ENCODE measurements at regions of chr11 and their contacts with region 1.

Region 1: DNA sequence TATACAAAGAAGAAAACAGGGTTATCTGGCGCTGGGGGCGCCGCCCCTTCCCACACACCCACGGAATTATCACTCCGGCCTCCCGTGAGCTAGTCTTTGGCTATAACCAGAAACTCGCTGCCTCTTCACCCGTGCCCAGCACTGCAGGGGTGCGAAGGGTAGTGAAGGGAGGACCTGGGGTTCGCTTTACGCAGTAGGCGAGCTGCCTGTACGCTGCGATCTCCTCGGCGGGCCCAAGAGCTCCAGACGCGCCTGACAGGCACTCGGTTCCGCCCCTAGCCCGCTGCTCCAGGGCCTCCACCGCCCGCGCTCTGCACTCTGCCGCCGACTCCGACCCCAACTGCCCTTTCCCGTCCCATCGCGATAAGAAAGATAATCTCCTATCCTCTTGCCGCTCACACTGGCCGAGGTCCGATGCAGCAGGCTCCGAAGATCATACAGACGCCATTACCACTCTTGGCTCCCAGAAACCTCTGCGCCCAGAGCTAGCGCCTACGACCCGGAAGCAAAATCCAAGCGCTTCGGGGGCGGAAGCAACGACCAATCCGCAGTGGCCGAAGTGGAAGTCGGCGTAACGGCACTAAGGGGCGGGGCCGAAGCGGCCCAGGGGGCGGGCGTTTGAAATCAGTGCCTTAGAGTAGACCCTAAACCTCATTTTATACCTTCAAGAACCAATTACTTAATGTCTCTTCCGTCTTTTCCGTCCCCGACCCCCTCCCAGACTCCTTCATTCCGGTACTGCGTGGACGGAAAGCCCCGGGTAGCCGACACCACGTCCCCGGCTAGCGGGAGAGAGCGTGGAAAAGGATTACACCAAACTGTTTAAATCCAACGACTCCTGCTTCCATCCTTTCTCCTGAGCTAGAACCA is at the starts of genes CWC15 and KDM4D:
- DNase-seq: peak; percentile 97
- H3K4me3 Mint-ChIP-seq: peak within 1 kb of the TSS; percentile 97
- H3K27ac Mint-ChIP-seq: peak within 1 kb of the TSS; percentile 89
- H3K4me1 Mint-ChIP-seq: peaks cover 38% of the 10 kb centered on the region
- H3K27me3 Mint-ChIP-seq: no peaks in the 10 kb centered on the region
- total RNA-seq, gene CWC15: 70.6 to 72.3 TPM
- total RNA-seq, gene KDM4D: 1.7 to 2.1 TPM

Region 2: GRCh38 chr11:93784152-93784934 is 1189.0 kb before region 1 on chr11 and contains the start of gene MED17:
- CTCF ChIA-PET with region 1: no interaction called
- intact Hi-C with region 1: loop called (anchors 1 kb)
- DNase-seq: peak; percentile 94
- H3K4me3 Mint-ChIP-seq: peak within 1 kb of the TSS; percentile 99
- H3K27ac Mint-ChIP-seq: peak within 1 kb of the TSS; percentile 98
- H3K4me1 Mint-ChIP-seq: peaks cover 43% of the 10 kb centered on the region
- H3K27me3 Mint-ChIP-seq: no peaks in the 10 kb centered on the region
- total RNA-seq, gene MED17: 19.4 to 22.6 TPM

Region 3: GRCh38 chr11:94543695-94544645 is 429.4 kb before region 1 on chr11 and contains the start of gene FUT4:
- CTCF ChIA-PET with region 1: no interaction called
- intact Hi-C with region 1: loop called (anchors 5 kb)
- DNase-seq: peak; percentile 80
- H3K4me3 Mint-ChIP-seq: peak within 1 kb of the TSS; percentile 100
- H3K27ac Mint-ChIP-seq: peak within 1 kb of the TSS; percentile 98
- H3K4me1 Mint-ChIP-seq: peaks cover 32% of the 10 kb centered on the region
- H3K27me3 Mint-ChIP-seq: no peaks in the 10 kb centered on the region
- total RNA-seq, gene FUT4: 2.8 to 2.9 TPM

Region 4: GRCh38 chr11:95084509-95084908 is 111.2 kb after region 1 on chr11:
- CTCF ChIA-PET with region 1: no interaction called
- intact Hi-C with region 1: loop called (anchors 1 kb)
- DNase-seq: peak; percentile 84
- H3K4me3 Mint-ChIP-seq: no peak overlapping the region
- H3K27ac Mint-ChIP-seq: peak overlapping the region; percentile 69
- H3K4me1 Mint-ChIP-seq: peaks cover 42% of the 10 kb centered on the region
- H3K27me3 Mint-ChIP-seq: no peaks in the 10 kb centered on the region

Region 5: DNA sequence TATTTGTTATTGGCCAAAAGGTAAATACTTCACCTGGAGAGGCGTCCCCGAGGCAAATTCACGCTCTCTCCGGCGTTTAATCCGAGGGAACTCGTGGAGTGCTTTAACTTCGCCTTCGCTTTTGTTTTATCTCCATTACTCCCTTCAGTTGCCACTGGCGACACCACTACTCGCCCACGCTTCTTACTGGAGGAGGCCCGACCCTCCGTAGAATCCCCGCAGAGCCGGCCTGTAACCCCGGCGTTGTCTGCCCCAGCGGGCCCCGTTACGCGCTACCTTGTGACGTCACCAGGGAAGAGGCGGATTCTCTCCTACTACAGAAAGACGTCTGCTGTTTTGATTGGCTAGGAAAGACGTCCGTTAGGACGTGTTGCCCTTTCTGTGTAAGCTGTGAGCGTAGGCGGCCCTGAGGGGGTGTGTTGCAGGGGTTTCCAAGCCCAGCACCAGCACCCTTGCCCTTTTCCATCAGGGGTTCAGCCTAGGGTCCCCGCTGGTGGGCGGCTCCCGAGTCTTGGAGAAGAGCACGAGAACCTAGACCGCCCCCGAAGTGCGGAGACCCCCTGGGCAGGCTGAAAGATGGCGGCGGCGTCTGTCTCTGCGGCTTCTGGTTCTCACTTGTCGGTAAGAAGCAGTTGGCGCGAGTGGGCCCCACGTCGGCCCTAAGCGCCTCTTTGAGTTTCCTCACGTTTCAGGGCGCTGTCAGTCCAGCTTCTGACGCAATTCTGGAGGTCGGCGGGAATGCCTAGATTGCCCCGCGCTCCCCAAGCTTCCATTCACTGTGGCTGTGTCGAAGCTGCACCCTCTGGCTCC is 817.0 kb after region 1 on chr11 and contains the start of gene CEP57:
- CTCF ChIA-PET with region 1: no interaction called
- intact Hi-C with region 1: loop called (anchors 1 kb)
- DNase-seq: peak; percentile 98
- H3K4me3 Mint-ChIP-seq: peak within 1 kb of the TSS; percentile 99
- H3K27ac Mint-ChIP-seq: peak within 1 kb of the TSS; percentile 100
- H3K4me1 Mint-ChIP-seq: peaks cover 56% of the 10 kb centered on the region
- H3K27me3 Mint-ChIP-seq: no peaks in the 10 kb centered on the region
- total RNA-seq, gene CEP57: 110 to 115 TPM

Measured in activated naive CD4-positive, alpha-beta T cell treated with anti-CD3 and anti-CD28 coated beads for 36 hours (primary cell).